ENCODE measurements at regions of chr5 and their contacts with region 1.

Region 1: DNA sequence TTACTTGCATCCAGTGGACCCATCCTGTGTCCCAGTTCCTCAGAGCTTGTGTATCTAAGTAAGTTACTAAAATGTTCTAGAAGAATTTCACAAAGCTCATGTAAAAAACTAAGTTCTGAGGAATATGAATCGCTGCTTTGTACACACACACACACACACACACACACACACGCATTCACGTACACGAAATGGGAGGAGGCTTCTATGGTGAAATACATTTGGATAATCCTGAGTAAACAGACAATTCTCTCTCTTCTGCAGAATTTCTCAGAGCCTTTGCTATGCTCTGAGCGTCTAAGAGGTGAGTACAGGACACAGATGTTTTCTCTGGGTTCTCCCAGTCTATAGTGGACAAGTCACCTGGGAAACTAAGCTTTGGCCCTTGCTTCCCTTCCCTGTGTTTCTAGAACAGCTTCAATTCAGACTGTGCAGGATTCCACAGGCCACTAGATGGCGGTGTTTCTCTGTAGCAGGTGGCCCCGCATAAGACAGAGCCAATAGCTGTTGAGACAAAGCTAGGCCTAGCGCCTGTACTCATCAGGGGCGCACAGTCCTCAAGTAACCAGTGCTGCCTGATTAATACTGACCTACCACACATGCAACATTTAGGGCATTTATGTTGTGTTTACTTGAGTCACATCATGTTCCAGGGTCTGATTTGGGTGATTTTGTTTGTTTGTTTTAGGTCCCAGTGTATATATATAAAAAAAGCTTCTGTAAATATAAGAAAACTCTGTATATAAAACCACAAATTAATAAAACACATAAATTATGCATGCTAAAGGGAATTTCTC is 114.8 kb downstream of the LIFR start:
- DNase-seq: peak; percentile 75 to 91
- ATAC-seq: peak; percentile 91 to 98 (median 95)
- H3K4me3 ChIP-seq: no peak overlapping the region
- H3K27ac ChIP-seq: no peak overlapping the region
- H3K4me1 ChIP-seq: peaks cover 0 to 18% (median 5%) of the 10 kb centered on the region in 9 donors
- H3K27me3 ChIP-seq: peaks cover 0 to 73% (median 0%) of the 10 kb centered on the region in 7 donors
- CTCF ChIP-seq: peak; percentile 90 to 98 (median 97)

Region 2: GRCh38 chr5:38467353-38468040 is 25.8 kb after region 1 on chr5:
- intact Hi-C with region 1: no loop called
- DNase-seq: peak; percentile 53 to 64
- ATAC-seq: peak; percentile 9 to 60 (median 48)
- H3K4me3 ChIP-seq: no peak overlapping the region
- H3K27ac ChIP-seq: peak overlapping the region; percentile 8 to 87 (median 76)
- H3K4me1 ChIP-seq: peaks cover 35 to 83% (median 76%) of the 10 kb centered on the region in 9 donors
- H3K27me3 ChIP-seq: peaks cover 0 to 63% (median 0%) of the 10 kb centered on the region in 7 donors
- CTCF ChIP-seq: no peak

Region 3: GRCh38 chr5:38540314-38540713 is 98.7 kb after region 1 on chr5:
- intact Hi-C with region 1: loop called in 2 of 10 experiments (anchors 10 kb)
- DNase-seq: peak; percentile 32 to 39
- ATAC-seq: peak; percentile 75 to 95 (median 92)
- H3K4me3 ChIP-seq: no peak overlapping the region
- H3K27ac ChIP-seq: peak overlapping the region in 6 of 10 donors; percentile 3 to 37 (median 14)
- H3K4me1 ChIP-seq: peaks cover 6 to 97% (median 48%) of the 10 kb centered on the region in 9 donors
- H3K27me3 ChIP-seq: no peaks in the 10 kb centered on the region
- CTCF ChIP-seq: no peak

Region 4: DNA sequence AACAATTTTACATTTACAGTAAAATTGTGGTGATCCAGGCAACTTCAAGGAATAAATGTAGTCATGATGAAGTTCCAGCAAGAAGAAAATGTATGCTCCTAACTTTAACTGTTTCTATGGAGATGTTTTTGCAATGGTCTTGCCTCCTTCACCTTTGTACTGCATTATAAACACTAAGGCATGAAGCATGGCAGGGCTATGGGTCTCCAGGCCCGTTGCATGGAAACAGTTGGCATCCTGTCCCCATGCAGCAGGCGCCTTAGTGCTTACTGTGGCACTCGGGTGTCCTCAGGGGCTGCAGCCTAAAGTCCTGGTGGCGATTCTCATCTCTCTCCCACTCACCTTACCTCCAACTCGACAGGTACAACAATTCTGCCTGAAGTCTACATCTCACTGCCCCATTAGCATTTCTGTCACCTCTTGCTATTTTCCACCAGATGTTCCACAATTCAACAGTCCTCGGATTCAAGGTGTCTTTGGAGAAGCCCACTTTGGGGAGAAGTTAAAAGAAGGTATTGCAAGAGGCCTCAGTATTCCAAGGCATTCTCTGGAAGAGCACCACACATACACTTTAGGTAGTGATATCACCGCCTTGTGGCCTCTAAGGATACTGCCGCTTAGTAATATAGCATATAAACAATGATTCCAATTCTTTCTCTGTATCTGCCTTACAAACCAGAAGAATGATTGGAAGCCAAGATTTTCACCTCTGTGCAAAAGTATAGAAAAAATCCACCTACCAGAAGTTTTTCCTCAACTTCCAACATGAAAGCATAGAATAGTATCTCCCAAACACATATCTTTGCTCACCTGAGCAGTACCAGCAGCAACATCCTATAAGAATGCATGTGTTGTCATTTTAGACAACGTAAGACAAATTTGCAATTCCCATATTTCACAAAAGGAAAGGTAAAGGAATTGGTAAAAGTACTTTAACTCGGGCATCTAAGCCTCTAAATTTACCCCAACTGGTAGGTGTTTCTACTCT is 109.7 kb after region 1 on chr5:
- intact Hi-C with region 1: loop called in 7 of 10 experiments (anchors 5 to 10 kb)
- DNase-seq: no peak
- ATAC-seq: peak in 5 of 8 donors; percentile 44 to 62 (median 52)
- H3K4me3 ChIP-seq: no peak overlapping the region
- H3K27ac ChIP-seq: peak overlapping the region in 5 of 10 donors; percentile 2 to 45 (median 33)
- H3K4me1 ChIP-seq: peaks cover 0 to 84% (median 53%) of the 10 kb centered on the region in 9 donors
- H3K27me3 ChIP-seq: peaks cover 0 to 39% (median 0%) of the 10 kb centered on the region in 7 donors
- CTCF ChIP-seq: peak; percentile 17 to 71 (median 58)

Region 5: DNA sequence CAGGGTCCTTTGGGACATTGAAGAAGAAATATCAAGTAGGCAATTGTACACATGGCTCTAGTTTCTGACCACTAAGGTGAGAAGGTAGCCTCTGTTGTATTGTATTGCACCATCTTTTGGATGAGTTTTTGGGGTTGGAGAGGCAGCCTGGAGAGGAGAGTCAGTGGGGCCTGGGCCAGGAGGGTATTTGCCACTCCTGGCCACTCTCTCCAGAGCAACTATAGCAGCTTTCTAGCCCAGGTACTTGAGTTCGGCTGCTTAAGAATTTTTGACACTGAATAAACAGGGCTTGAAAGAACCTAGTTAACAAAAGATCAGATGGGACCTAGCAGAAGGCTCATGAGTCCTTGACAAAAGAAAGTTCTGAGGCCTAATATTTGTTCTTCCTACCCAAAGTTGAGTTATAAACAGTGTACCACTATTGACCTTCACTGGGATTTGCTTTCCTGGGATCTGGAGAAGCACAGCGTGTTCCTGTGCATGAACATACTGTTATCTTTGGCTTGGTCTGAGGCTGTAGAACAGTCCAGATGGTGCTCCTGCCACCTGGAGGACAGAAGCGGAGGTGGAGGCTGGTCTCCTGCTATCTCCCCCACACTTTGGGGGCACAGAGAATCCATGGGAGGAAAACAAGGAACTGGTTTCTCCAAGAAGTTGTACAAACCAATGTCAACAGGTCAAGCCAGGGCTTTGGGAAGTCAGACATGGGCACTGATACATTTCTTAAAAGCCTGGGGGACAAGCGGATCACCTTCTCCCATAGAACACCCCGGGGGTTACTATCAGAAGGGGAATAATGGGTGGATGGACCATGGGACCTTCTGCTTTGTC is 225.2 kb after region 1 on chr5:
- intact Hi-C with region 1: loop called (anchors 1 to 10 kb)
- DNase-seq: peak; percentile 44 to 51
- ATAC-seq: peak; percentile 87 to 97 (median 92)
- H3K4me3 ChIP-seq: no peak overlapping the region
- H3K27ac ChIP-seq: peak overlapping the region in 5 of 10 donors; percentile 1 to 42 (median 31)
- H3K4me1 ChIP-seq: peaks cover 2 to 30% (median 20%) of the 10 kb centered on the region in 9 donors
- H3K27me3 ChIP-seq: no peaks in the 10 kb centered on the region
- CTCF ChIP-seq: peak; percentile 55 to 85 (median 75)

Region 6: DNA sequence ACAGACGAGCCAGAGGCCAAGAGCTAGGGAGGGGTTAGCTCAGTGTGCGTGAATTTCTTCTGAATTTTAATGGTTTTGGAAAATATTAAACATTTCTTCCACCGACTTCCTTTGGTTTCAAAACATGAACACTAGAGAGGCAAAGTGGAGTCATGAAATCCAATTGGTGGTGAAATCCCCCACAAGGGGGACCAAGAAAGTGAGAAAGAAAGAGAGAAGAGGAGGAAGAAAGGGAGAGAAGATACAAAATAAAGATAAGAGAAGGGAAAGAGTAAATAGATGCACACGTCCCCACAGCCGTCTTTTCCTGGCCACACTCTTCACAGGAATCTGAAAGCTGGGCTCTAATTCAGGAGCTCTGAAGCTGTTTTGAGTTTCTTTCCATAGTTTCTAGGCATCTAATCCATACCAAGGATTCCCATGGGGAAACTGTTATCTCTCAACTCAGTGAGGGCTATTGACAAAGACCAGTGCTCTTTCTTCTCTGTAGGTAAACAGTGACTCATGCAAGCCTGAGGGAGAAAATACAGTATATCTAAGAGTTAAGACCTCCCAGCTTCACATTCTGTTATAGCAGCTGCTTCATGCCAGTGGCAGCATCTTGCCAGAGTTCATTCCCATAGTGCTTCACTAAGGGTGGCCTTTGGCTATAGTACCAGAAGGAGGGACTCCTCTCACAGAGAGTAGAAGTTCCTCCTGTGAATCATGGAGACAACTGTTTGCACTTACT is 230.6 kb after region 1 on chr5:
- intact Hi-C with region 1: loop called (anchors 1 to 10 kb)
- DNase-seq: no peak
- ATAC-seq: no peak
- H3K4me3 ChIP-seq: no peak overlapping the region
- H3K27ac ChIP-seq: no peak overlapping the region
- H3K4me1 ChIP-seq: no peaks in the 10 kb centered on the region
- H3K27me3 ChIP-seq: no peaks in the 10 kb centered on the region
- CTCF ChIP-seq: no peak

Region 7: GRCh38 chr5:38916802-38917201 is 475.2 kb after region 1 on chr5:
- intact Hi-C with region 1: loop called in 3 of 10 experiments (anchors 10 kb)
- DNase-seq: no peak
- ATAC-seq: no peak
- H3K4me3 ChIP-seq: no peak overlapping the region
- H3K27ac ChIP-seq: no peak overlapping the region
- H3K4me1 ChIP-seq: no peaks in the 10 kb centered on the region
- H3K27me3 ChIP-seq: no peaks in the 10 kb centered on the region
- CTCF ChIP-seq: no peak

Region 8: GRCh38 chr5:39302472-39302871 is 860.8 kb after region 1 on chr5:
- intact Hi-C with region 1: no loop called
- DNase-seq: no peak
- ATAC-seq: no peak
- H3K4me3 ChIP-seq: no peak overlapping the region
- H3K27ac ChIP-seq: no peak overlapping the region
- H3K4me1 ChIP-seq: peaks cover 0 to 3% (median 0%) of the 10 kb centered on the region in 9 donors
- H3K27me3 ChIP-seq: no peaks in the 10 kb centered on the region
- CTCF ChIP-seq: no peak